ENCODE measurements at regions of chr22 and their contacts with region 1.

Region 1: GRCh38 chr22:28442264-28442710 is 237.4 kb downstream of the TTC28 start:
- DNase-seq: peak; percentile 73
- H3K4me3 Mint-ChIP-seq: peak overlapping the region; percentile 86
- H3K27ac Mint-ChIP-seq: peak overlapping the region; percentile 67
- H3K4me1 Mint-ChIP-seq: peaks cover 25% of the 10 kb centered on the region
- H3K27me3 Mint-ChIP-seq: peaks cover 8% of the 10 kb centered on the region

Region 2: DNA sequence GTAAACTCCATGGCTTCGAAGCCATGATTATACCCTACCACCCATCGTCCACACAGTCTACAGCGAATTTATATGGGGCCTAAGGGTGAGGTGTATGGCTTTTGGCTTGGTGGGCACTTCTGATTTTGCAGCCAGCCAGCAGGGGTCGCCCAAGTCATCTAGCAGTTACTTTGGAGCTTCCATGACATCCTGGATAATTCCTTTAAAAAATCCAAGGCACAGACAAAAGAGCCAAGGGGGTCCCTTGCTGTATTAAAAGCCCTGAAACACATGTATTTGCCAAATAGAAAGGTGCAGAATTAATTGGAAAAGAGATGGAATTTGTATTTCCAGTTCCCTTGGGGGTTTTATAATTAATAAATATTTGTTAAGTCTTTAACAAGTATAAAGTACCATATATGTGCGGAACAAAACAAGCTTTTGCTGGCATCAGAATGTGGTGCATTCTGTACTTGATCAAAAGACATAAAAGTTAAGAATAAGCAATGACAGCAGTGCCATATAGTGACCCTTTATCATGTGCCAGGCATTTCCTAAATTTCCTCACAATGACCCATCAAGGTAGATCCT is 390.4 kb before region 1 on chr22:
- intact Hi-C with region 1: loop called (anchors 1 kb)
- DNase-seq: no peak
- H3K4me3 Mint-ChIP-seq: no peak overlapping the region
- H3K27ac Mint-ChIP-seq: no peak overlapping the region
- H3K4me1 Mint-ChIP-seq: no peaks in the 10 kb centered on the region
- H3K27me3 Mint-ChIP-seq: no peaks in the 10 kb centered on the region

Region 3: DNA sequence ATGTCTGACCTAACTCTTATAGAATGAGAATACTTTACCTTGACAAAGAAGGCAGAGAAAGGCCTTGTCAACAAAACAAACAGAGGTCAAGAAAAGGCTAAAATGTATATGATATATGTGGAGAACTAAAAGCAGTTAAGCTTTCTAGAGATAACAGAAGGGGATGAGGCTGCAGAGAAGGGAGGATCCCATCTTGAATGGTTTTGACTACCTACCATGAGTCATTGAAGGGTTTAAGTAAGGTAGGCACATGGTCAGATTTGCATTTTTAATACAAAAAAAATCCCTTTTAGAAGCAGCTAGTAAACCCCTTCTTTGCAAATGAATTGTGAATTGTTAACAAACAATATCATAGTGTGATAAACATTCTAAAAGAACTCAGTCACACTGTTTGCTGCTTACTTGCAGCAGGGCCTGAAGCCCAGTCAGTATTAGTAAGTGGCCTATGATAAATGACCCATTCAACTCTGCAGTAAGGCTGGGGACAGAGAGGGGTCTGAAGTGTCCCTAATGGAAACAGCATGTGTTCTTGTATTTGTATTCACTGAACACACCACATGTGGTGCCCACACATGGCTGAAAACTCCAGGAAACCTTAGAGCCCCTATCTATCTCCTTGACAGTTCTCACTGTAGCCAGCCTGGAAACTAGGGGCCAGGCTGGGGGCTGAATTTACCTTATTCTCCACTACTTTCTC is 194.5 kb before region 1 on chr22:
- intact Hi-C with region 1: loop called (anchors 1 kb)
- DNase-seq: no peak
- H3K4me3 Mint-ChIP-seq: no peak overlapping the region
- H3K27ac Mint-ChIP-seq: no peak overlapping the region
- H3K4me1 Mint-ChIP-seq: no peaks in the 10 kb centered on the region
- H3K27me3 Mint-ChIP-seq: no peaks in the 10 kb centered on the region

Region 4: DNA sequence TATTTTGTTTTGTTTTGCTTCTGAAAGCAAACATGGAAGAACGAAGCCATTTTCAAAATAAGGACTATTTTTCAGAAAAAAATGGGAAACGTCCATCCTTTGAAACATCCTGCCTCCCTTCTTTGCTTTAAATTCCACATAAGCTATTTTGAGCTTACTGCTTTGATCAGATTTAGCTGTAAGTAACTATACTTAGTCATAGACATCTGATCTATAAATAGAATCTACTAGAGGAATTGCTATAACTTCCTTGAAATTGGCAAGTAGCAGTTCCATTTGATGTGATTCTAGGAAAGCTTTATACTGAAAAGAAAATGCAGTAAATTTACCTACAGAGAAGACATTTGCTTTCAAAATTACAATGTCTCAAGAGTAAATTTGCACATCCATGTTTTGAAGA is 68.5 kb before region 1 on chr22:
- intact Hi-C with region 1: loop called (anchors 5 kb)
- DNase-seq: no peak
- H3K4me3 Mint-ChIP-seq: no peak overlapping the region
- H3K27ac Mint-ChIP-seq: peak overlapping the region; percentile 30
- H3K4me1 Mint-ChIP-seq: peaks cover 74% of the 10 kb centered on the region
- H3K27me3 Mint-ChIP-seq: no peaks in the 10 kb centered on the region

Region 5: DNA sequence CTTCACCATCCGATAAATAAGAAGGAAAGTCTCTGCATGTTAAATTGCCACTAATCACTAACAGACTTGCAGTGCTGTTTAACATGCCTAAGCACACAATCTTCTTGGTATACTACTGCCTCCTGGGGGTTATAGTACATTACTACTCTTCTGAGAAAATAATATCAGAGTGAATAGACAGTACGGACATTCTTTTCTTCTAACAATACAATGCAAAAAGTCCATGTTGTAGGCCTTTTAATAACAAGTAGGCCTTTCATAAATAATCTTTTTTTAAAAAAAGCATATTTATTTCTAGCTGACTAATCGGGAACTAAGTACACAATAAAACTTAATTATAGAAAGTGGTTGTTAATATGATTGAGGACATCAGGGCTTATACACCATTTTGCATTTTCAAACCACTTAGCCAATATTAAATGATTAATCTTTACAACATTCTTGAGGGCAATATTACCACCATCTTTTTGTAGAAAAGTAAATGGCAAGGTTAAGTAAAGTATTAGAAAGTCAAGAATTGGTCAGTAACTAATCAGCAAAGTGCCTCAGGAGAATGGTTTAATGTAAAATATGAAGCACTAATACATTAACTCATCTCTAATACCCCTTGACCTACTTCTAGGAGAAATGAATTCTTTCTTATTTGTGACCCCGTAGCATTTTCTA is 152.6 kb after region 1 on chr22:
- intact Hi-C with region 1: loop called (anchors 10 kb)
- DNase-seq: no peak
- H3K4me3 Mint-ChIP-seq: no peak overlapping the region
- H3K27ac Mint-ChIP-seq: no peak overlapping the region
- H3K4me1 Mint-ChIP-seq: no peaks in the 10 kb centered on the region
- H3K27me3 Mint-ChIP-seq: peaks cover 30% of the 10 kb centered on the region

Region 6: DNA sequence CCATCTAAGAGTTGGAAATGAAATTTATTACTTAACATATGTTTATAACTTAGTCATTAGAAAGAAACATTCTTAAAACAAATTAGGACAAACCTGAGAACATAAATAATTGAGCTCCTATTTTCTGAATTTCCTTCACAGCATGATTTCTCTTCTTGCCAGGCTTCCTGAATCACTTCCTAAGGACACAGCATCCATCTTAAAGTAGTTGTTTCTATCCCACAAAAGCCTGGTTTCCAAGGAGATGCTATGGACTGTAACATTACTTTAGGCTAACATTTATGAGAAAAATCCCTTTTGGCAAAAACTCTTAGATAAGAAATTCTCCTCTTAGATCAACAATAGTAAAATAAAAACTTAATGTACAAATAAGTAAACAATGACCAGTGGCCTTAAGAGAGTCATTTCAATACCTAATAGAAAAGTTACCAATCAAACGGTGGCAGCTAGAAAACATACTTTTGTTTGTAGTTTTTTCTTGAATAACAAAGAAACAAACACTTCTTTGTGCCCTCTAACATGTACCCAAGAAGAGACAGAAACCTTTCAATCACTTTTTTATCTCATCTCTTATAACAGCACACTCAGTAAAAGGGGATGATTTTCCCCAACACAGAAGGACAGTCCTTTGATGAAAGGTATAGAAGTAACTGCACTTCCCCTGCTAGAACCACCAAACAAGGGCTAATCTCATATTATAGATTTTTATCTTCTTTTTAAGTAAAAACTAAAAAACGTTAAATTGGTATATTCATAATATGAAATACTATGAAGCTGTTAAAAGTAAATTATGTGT is 162.9 kb after region 1 on chr22:
- intact Hi-C with region 1: no loop called
- DNase-seq: no peak
- H3K4me3 Mint-ChIP-seq: no peak overlapping the region
- H3K27ac Mint-ChIP-seq: no peak overlapping the region
- H3K4me1 Mint-ChIP-seq: no peaks in the 10 kb centered on the region
- H3K27me3 Mint-ChIP-seq: peaks cover 44% of the 10 kb centered on the region

Measured in activated T-helper 1 cell treated with anti-CD3 and anti-CD28 coated beads, Interleukin-12 subunit alpha, Interleukin-12 subunit beta, Interleukin-2, Interleukin-4 antibody, amounts not matched to agents 30 ng/mL and 10 ng/mL and 1 ng/mL, durations not matched to agents 14 hours and 24 hours and 36 hours (primary cell).